ENCODE measurements at regions of chr1 and their contacts with region 1.

Region 1: DNA sequence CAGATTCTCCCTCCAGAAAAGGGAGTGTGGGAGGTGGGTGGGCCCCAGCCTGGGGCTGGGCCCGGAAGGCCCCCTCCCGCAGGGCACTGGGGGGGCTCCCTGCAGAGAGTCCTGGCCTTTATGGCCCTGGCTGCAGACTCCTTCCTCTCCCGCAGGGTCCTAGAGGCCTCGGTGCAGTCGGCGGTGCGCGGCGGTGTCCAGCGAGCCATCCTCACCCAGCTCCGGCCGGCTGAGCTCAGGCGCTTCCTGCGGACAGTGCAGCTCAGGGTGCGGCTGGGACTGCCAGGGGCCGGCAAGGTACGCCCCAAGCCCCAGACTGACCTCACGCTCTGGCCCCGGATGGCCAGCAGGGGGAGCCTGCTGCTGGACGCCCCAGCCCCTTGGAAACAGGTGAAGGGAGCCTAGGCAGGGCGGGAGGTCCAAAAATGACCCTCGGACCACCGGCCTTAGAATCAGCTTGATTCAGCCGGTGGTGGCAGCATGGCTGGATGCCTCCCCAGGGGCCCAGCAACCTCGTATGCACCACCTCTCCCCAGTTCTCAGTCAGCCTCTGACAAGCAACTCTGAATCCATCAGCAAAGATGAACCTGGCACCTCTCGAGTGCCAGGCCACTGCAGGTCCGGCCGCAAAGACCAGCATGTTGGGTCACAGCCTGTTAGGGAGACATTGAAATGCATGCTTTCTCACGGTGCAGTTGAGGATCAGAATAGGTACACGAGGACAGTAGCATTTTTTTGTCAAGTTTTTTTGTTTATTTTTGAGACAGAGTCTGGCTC is 20.6 kb downstream of the MTHFR start:
- DNase-seq: peak; percentile 85
- CTCF ChIP-seq: peak; percentile 91

Region 2: DNA sequence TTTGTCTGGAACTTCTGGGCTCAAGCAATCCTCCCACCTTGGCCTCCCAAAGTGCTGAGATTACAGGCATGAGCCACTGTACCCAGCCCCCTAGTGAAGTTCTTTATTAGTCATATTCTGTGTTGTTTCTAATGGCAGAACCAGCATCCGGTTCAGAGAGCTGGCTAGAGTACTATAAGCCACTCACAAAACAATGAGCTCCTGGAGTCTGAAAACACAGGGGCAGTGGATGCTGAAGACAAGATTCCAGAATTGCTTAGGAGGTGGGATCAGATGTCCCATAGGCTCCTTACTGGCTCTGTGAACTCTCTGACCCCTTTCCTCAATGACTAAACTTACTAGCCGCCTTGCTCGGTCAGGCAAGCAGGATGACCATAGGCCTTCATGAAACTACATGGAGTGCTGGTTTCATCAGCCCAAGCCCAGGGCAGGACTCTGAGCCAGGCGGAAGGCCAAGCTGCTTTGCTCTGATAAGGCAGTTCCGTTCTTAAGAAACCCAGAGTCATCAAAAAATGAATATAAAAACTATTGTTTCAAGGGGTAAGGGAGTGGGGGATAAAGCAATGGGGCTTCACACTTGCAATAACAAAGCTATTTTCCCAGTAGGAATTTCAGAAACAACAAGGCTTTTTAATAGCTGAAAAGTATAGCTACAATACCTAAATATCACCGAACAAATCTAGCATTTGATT is 12.5 kb after region 1 on chr1:
- CTCF ChIA-PET with region 1: interaction called, 13 read pairs
- POLR2A ChIA-PET with region 1: no interaction called
- DNase-seq: no peak
- CTCF ChIP-seq: no peak

Region 3: DNA sequence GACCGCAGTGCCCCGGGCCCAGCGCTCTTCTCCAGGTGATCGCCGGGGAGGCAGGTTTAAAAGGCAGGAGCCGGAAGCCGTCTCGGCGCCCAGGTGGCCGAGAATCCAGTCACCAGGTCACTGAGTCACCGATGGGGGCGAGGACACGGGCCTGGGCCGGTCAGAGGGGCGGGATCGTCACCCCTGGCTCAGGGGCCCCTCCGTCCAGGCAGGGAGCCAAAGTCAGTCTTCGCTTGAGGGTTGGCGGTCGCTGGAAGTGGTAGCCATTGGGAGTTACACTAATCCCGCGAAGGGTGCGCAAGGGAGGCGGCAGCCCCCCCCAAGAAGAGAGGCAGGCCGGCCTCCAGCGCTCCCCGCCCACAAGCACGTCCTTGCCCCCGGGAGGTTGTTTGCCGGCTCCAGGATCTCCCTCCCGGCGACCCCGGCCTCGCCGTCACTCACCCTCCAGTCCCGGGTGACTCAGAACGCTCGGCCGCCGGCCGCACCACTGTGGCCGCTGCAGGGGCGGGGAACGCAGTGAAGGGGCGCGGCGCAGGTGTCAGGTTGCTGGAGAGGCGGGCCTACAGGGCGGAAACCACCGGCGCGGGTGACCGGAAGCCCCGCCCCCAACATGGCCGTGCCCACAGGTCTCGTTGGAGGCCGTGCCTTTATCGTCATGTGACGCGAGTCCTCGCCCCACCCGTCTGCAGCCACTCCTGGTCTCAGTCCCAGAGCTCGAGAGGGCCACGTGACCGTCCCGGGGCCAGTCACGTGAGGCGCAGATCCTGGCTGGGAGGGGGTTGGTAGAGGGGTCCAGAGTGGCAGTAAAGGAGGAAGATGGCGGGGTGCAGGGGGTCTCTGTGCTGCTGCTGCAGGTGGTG is 20.5 kb after region 1 on chr1 and contains the starts of genes CLCN6 and MTHFR:
- CTCF ChIA-PET with region 1: interaction called, 12 read pairs
- POLR2A ChIA-PET with region 1: no interaction called
- DNase-seq: peak; percentile 99
- CTCF ChIP-seq: no peak

Region 4: DNA sequence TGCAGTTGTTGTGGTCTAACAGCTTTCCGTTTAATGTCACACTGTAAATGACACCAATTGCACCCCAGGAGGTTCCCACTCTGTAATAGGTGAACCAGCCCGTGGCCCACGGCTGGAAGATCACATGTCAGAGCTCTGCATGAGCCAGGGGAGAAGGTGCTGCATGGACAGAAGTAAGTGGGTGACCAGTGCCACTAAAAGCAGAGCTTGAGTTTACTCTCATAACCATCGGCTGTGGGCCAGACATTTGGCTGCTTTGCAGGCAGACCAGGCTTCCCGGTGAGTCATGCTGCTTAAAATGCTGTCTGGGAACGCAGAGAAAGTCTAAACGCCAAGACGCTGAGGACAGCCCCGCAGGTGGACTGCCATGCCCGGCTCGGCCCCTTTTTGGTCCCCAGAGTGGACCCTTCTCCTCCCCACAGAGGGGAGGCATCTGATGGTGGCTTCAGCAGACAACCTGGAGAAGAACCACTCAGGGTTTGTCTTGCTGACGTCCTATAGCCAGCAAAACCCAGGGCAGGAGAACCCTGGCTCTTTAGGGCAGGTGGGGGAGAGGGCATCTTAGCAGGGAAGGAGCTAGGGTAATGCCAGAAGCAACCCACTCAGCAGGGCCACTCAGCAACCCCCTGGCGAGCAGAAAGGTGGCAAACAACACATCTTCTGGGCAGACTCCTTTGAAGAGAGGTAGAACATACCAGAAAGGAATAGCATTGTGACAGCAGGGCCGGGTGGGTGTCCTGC is 133.8 kb after region 1 on chr1:
- CTCF ChIA-PET with region 1: no interaction called
- POLR2A ChIA-PET with region 1: no interaction called
- DNase-seq: no peak
- CTCF ChIP-seq: no peak